ENCODE measurements at regions of chr2 and their contacts with region 1.

Region 1: GRCh38 chr2:27683390-27684071 is 19.8 kb downstream of the SLC4A1AP start:
- DNase-seq: peak; percentile 91
- H3K4me3 ChIP-seq: no peak overlapping the region
- H3K27ac ChIP-seq: peak overlapping the region; percentile 97
- H3K4me1 ChIP-seq: peaks cover 25% of the 10 kb centered on the region
- H3K27me3 ChIP-seq: no peaks in the 10 kb centered on the region
- CTCF ChIP-seq: peak; percentile 89 to 99
- POLR2A ChIP-seq: no peak

Region 2: DNA sequence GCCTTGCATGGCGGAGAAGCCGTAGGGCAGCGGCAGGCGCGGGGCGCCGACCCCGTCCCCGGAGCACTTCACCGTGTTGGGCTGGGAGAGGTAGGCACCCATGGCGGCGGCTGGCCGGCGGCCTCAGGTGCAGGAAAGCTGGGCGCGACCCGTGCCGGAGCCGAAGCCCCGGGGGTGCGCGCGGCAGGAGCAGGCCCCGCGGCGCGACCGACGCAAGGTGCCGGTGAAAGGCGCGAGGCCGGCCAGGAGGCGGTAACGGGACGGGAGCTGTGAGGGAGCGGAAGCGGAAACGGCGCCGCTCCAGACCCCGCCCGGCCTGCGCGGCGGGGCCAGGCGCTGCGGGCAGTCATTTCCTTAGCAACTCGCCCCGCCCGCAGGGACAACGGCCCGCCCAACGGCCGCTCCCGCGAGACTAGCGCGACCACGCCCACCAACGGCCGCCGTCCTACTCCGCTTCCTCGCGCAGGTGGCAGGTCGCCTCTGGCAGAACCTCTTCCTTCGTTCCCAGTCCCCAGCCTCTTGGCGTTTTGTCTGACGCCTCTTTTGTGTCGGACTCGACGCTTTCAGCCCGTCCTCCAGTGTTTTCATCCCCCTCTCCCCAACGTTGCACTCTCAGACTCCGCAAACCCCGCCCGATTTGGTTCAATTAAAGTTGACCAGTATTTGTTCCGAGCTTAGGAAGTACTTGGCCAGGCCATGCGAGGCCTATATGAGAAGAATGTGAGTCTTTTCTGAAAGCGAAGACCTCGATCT is 274.0 kb before region 1 on chr2 and contains the start of gene PPM1G:
- CTCF ChIA-PET with region 1: interaction called, 65 read pairs
- POLR2A ChIA-PET with region 1: no interaction called
- dilution Hi-C with region 1: no loop called
- intact Hi-C with region 1: loop called (anchors 1 kb)
- DNase-seq: peak; percentile 97
- H3K4me3 ChIP-seq: peak within 1 kb of the TSS; percentile 71 to 90 (median 84)
- H3K27ac ChIP-seq: peak within 1 kb of the TSS; percentile 73
- H3K4me1 ChIP-seq: peaks cover 20% of the 10 kb centered on the region
- H3K27me3 ChIP-seq: peaks cover 1 to 5% of the 10 kb centered on the region in 2 experiments
- CTCF ChIP-seq: no peak
- POLR2A ChIP-seq: peak; percentile 98
- total RNA-seq, gene PPM1G: 131 and 135 TPM in 2 replicates

Region 3: GRCh38 chr2:27494944-27495554 is 188.5 kb before region 1 on chr2 and contains the start of gene FNDC4:
- CTCF ChIA-PET with region 1: interaction called, 11 read pairs
- POLR2A ChIA-PET with region 1: no interaction called
- dilution Hi-C with region 1: no loop called
- intact Hi-C with region 1: no loop called
- DNase-seq: peak; percentile 37
- H3K4me3 ChIP-seq: peak within 1 kb of the TSS; percentile 78 to 89 (median 85)
- H3K27ac ChIP-seq: peak within 1 kb of the TSS; percentile 8
- H3K4me1 ChIP-seq: peaks cover 18% of the 10 kb centered on the region
- H3K27me3 ChIP-seq: no peaks in the 10 kb centered on the region
- CTCF ChIP-seq: no peak
- POLR2A ChIP-seq: peak; percentile 73
- total RNA-seq, gene FNDC4: 15.5 and 20.0 TPM in 2 replicates

Region 4: GRCh38 chr2:27647289-27647688 is 36.2 kb before region 1 on chr2:
- CTCF ChIA-PET with region 1: interaction called, 10 read pairs
- POLR2A ChIA-PET with region 1: interaction called, 4 read pairs
- dilution Hi-C with region 1: no loop called
- intact Hi-C with region 1: no loop called
- DNase-seq: no peak
- H3K4me3 ChIP-seq: no peak overlapping the region
- H3K27ac ChIP-seq: no peak overlapping the region
- H3K4me1 ChIP-seq: peaks cover under 1% of the 10 kb centered on the region
- H3K27me3 ChIP-seq: no peaks in the 10 kb centered on the region
- CTCF ChIP-seq: no peak
- POLR2A ChIP-seq: no peak

Region 5: DNA sequence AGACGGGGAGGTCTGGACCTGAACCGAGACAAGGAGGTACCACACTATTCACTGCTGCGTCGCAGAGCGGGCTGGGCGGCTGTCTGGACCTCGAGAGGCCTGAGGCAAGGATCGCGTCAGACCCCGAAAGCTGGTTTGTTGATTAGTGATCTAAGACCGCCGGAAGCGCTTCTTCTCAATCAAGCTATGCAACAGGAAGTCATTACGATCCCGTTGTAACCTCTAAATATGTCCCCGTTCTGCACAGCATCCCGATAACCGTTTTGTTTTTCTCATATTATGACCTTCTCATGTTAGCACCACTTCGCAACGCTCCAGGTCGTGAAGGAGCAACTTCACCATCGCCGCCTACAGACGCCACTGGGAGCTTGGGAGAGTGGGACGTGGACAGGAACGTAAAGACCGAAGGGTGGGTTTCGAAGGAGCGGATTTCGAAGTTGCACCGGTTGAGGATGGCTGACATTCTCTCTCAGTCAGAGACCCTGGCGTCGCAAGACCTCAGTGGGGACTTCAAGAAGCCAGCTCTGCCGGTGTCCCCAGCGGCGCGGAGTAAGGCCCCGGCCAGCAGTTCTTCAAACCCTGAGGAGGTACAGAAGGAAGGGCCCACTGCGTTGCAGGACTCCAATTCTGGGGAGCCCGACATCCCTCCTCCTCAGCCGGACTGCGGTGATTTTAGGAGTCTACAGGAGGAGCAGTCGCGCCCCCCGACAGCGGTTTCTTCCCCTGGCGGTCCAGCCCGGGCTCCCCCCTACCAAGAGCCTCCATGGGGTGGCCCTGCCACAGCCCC is 19.9 kb before region 1 on chr2 and contains the starts of genes SLC4A1AP and SUPT7L:
- CTCF ChIA-PET with region 1: interaction called, 74 read pairs
- POLR2A ChIA-PET with region 1: interaction called, 6 read pairs
- dilution Hi-C with region 1: no loop called
- intact Hi-C with region 1: loop called (anchors 1 kb)
- DNase-seq: peak; percentile 92
- H3K4me3 ChIP-seq: peak within 1 kb of the TSS; percentile 71 to 98 (median 84)
- H3K27ac ChIP-seq: peak within 1 kb of the TSS; percentile 73
- H3K4me1 ChIP-seq: peaks cover 37% of the 10 kb centered on the region
- H3K27me3 ChIP-seq: no peaks in the 10 kb centered on the region
- CTCF ChIP-seq: no peak
- POLR2A ChIP-seq: peak; percentile 67
- total RNA-seq, gene SLC4A1AP: 26.2 and 28.4 TPM in 2 replicates
- total RNA-seq, gene SUPT7L: 30.2 and 30.3 TPM in 2 replicates

Region 6: GRCh38 chr2:27723372-27724144 is 40.0 kb after region 1 on chr2:
- CTCF ChIA-PET with region 1: interaction called, 13 read pairs
- POLR2A ChIA-PET with region 1: no interaction called
- dilution Hi-C with region 1: no loop called
- intact Hi-C with region 1: no loop called
- DNase-seq: peak; percentile 68
- H3K4me3 ChIP-seq: no peak overlapping the region
- H3K27ac ChIP-seq: no peak overlapping the region
- H3K4me1 ChIP-seq: peaks cover 14% of the 10 kb centered on the region
- H3K27me3 ChIP-seq: no peaks in the 10 kb centered on the region
- CTCF ChIP-seq: peak; percentile 78 to 90
- POLR2A ChIP-seq: no peak

Measured in endothelial cell of umbilical vein (primary cell).